Head of caudate nucleus (tissue), 42 donors: ENCODE measurements at regions of chr20 and their contacts with region 1.

Region 1: DNA sequence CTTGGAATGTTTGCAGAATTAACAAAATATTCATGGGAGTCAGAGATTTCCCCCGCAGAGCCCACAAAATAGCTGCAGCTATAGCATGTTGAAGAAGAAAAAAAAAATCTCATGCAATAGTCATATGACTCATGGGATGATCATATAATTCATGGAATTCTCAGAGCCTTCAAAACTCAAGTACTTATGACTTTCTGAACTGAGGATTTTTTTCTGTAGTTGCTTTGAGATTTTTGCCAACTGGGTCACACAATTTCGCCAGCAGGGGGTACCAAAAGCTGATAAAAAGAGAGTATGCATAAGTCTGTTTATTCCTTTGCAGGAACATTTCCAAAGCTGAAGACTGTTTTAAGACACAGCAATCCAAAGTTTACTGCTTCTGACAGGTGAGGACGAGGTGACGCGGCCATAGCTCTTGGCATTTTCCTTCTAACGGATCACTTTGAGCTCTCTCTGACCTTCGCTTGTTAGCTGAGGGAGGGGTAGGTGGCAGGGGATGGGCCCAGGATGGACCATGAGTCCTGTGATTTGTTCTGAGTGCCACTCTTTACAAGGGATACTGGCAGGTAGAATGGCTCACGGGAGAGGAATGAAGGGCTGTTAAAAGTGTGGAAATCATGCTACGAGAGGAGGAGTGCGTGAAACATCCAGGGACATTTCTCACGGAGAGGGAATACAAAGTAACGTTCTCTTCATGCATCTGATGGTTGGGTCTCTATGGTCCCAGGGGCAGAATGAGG is 586.2 kb upstream of the CHD6 start:
- DNase-seq: peak in 39 of 42 donors; percentile 18 to 80 (median 59)

Region 2: DNA sequence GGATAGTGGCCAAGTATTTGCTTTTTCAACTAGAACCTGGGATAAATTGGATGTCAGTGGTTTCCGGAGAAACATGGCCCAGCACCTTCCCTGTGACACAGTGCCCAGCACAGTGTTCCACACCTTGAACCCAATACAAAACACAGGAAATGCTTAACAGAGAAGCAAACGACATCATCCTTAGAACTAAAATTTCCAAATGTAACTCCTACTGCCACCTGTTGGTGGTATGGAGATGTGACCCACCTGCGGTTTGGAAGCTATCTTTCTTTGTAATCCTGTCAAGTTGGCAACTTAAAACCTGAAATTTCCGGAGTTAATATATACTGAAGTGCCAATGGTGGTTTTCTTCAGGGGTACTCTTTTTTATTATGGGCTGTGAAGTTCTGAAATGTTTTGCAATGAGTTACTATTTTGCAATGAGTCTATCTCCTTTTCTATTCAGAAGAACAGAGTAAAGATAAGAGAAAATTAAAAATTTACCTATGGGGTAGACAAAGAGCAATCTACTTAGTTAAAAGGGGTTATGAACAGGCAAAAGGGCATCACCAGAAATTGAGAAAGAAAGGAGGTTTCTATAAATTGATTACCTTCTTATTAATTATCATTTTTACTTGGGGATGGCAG is 326.6 kb after region 1 on chr20:
- intact Hi-C with region 1: loop called (anchors 10 kb)
- DNase-seq: peak in 17 of 42 donors; percentile 4 to 64 (median 27)

Region 3: GRCh38 chr20:42549496-42549895 is 345.1 kb after region 1 on chr20:
- intact Hi-C with region 1: no loop called
- DNase-seq: no peak